PC-9 (cell line): ENCODE measurements at regions of chr13 and their contacts with region 1.

Region 1: GRCh38 chr13:42345367-42345766 is 73.4 kb downstream of the AKAP11 start:
- DNase-seq: no peak
- H3K4me3 ChIP-seq: no peak overlapping the region
- H3K27ac ChIP-seq: no peak overlapping the region
- H3K4me1 ChIP-seq: no peaks in the 10 kb centered on the region
- H3K27me3 ChIP-seq: no peaks in the 10 kb centered on the region
- CTCF ChIP-seq: no peak

Region 2: GRCh38 chr13:43924549-43925245 is 1579.3 kb after region 1 on chr13:
- CTCF ChIA-PET with region 1: no interaction called
- POLR2A ChIA-PET with region 1: interaction called, 12 read pairs
- intact Hi-C with region 1: no loop called
- DNase-seq: no peak
- H3K4me3 ChIP-seq: no peak overlapping the region
- H3K27ac ChIP-seq: no peak overlapping the region
- H3K4me1 ChIP-seq: no peaks in the 10 kb centered on the region
- H3K27me3 ChIP-seq: no peaks in the 10 kb centered on the region
- CTCF ChIP-seq: no peak